HEK293 (cell line): ENCODE measurements at regions of chr2 and their contacts with region 1.

Region 1: GRCh38 chr2:161063157-161063954 is 96.9 kb upstream of the TANK start:
- H3K4me3 ChIP-seq: no peak overlapping the region
- H3K27ac ChIP-seq: no peak overlapping the region
- H3K4me1 ChIP-seq: no peaks in the 10 kb centered on the region
- CTCF ChIP-seq: peak; percentile 78

Region 2: DNA sequence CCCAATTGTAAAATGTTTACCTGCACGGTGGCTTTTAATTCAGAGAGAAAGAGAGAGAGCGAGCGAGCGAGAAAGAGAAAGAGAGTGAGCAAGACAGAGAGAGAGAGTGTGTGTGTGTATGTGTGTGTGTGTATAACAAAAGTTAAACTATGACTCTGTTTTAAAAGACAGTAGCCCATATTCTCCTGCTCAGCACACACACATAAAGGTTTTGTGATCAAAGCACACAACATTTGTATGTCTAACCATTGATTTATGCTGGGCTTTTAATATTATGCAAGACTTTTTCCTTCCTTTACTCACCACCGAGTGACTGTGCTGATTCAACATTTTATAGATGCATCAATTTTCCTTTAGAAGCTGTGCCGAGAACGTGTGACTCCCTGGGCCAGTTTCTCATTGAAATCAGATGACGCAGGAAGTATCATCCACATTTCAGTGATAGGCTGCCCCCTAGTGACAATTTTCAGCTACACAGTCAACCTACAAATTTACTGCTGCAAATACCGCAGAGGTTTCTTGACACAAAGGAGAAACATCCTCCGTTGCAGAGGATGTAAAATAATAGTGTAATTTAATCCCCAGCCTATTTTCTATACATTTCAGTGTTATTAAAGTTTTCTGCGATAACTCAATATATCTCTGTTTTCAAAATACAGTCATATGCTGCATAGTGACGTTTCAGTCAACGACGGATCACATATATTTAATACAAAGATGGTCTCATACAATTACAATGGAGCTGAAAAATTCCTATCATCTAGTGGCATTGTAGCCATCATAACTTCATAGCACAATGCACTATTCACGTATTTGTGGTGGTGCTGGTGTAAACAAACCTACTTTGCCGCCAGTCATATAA is 69.0 kb before region 1 on chr2:
- CTCF ChIA-PET with region 1: interaction called, 20 read pairs
- POLR2A ChIA-PET with region 1: no interaction called
- H3K4me3 ChIP-seq: no peak overlapping the region
- H3K27ac ChIP-seq: no peak overlapping the region
- H3K4me1 ChIP-seq: 0 out of 2 replicates have a peak, but pooled peaks cover 2% of the 10 kb centered on the region
- CTCF ChIP-seq: peak; percentile 71; the same call in 1 of the 2 replicates

Region 3: DNA sequence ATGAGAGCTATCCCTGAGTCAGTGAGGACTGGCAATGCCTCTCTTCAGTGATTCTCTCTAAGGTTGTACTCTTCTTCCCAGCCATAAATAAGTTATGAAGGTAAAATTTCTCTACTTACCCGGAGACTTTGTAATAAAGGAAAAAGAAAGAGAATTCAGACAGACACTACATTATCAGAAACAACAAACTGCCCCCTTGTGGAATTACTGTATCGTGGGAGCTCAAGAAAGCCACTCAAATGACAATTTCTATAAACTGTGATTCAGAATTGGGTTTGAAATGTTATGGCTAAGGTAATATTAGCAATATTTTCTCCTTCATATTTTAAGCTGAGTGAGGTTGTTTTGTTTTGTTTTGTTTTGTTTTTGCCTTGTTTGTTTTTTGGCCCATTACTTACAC is 59.0 kb before region 1 on chr2:
- CTCF ChIA-PET with region 1: interaction called, 21 read pairs
- POLR2A ChIA-PET with region 1: no interaction called
- H3K4me3 ChIP-seq: no peak overlapping the region
- H3K27ac ChIP-seq: no peak overlapping the region
- H3K4me1 ChIP-seq: no peaks in the 10 kb centered on the region
- CTCF ChIP-seq: no peak

Region 4: DNA sequence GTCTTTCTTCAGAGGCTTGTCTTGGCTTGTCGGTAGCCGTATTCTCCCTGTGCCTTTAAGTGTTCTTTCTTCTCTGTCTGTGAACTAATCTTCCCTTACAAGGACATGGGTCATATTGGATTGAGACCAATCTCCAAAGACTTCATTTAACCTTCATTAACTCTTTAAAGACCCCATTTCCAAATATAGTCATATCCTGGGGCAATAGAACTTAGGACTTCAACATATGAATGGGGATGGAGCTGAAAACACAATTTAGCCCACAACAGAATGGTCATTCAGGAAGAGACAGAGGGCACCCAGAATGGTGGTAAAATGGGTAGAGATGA is 14.8 kb after region 1 on chr2:
- CTCF ChIA-PET with region 1: interaction called, 13 read pairs
- POLR2A ChIA-PET with region 1: no interaction called
- H3K4me3 ChIP-seq: no peak overlapping the region
- H3K27ac ChIP-seq: no peak overlapping the region
- H3K4me1 ChIP-seq: no peaks in the 10 kb centered on the region
- CTCF ChIP-seq: no peak

Region 5: DNA sequence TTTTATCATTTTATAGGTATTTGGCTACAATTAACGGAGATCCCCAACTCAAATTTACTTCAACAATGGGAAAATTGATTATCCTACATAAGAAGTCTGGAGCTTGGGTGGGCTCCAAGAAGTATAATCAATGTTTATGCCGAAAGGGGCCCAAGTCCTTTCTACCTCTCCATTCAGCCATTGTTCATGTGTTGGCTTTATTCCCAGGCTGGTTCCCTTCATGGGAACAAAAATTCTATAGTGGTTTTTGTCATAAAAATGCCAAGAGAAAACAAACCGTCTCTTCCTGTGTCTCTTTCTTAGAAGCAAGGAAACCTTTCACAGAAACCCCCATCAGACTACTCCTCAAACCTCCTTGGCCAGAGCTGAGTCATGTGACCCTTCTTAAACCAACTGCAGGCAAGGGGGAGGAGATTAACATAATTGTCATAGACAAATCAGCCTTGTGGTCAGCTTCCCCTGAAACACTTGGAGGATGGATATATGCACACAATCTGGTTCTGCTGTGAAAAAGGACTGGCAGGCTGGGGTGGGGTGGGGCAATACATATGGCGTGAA is 21.8 kb after region 1 on chr2:
- CTCF ChIA-PET with region 1: interaction called, 13 read pairs
- POLR2A ChIA-PET with region 1: no interaction called
- H3K4me3 ChIP-seq: no peak overlapping the region
- H3K27ac ChIP-seq: no peak overlapping the region
- H3K4me1 ChIP-seq: no peaks in the 10 kb centered on the region
- CTCF ChIP-seq: no peak

Region 6: GRCh38 chr2:161273038-161273760 is 209.8 kb after region 1 on chr2:
- CTCF ChIA-PET with region 1: interaction called, 11 read pairs
- POLR2A ChIA-PET with region 1: no interaction called
- H3K4me3 ChIP-seq: no peak overlapping the region
- H3K27ac ChIP-seq: no peak overlapping the region
- H3K4me1 ChIP-seq: no peaks in the 10 kb centered on the region
- CTCF ChIP-seq: peak; percentile 53